HCT116 (cell line): ENCODE measurements at regions of chr5 and their contacts with region 1.

Region 1: GRCh38 chr5:58849921-58850667 is 267.2 kb downstream of the RAB3C start:
- DNase-seq: peak; percentile 21
- ATAC-seq: peak; percentile 83
- H3K4me3 ChIP-seq: no peak overlapping the region
- H3K27ac ChIP-seq: no peak overlapping the region
- H3K4me1 ChIP-seq: no peaks in the 10 kb centered on the region
- H3K27me3 ChIP-seq: peaks cover 33% of the 10 kb centered on the region; the same call in 1 of the 2 replicates
- CTCF ChIP-seq: peak; percentile 23 to 52 (median 51); a peak in 4 of 6 replicates
- POLR2A ChIP-seq: no peak
- RAD21 ChIP-seq: peak; percentile 61

Region 2: GRCh38 chr5:58477760-58478376 is 372.2 kb before region 1 on chr5:
- CTCF ChIA-PET with region 1: interaction called, 18 read pairs
- POLR2A ChIA-PET with region 1: no interaction called
- RAD21 ChIA-PET with region 1: no interaction called
- intact Hi-C with region 1: loop called (anchors 5 kb)
- DNase-seq: no peak
- ATAC-seq: peak; percentile 38; the same call in 1 of the 2 replicates
- H3K4me3 ChIP-seq: no peak overlapping the region
- H3K27ac ChIP-seq: no peak overlapping the region
- H3K4me1 ChIP-seq: no peaks in the 10 kb centered on the region
- H3K27me3 ChIP-seq: no peaks in the 10 kb centered on the region
- CTCF ChIP-seq: peak in 1 of 3 experiments; percentile 34; a peak in 1 of 6 replicates
- POLR2A ChIP-seq: no peak
- RAD21 ChIP-seq: peak; percentile 52